Left colon (tissue), 2 donors: ENCODE measurements at regions of chr1 and their contacts with region 1.

Region 1: GRCh38 chr1:42456010-42456758 is at the starts of genes PPCS and ZMYND12:
- DNase-seq: peak; percentile 83 to 96
- ATAC-seq: peak; percentile 94
- total RNA-seq, gene PPCS: 78.2 to 92.4 TPM
- total RNA-seq, gene ZMYND12: 1.2 to 2.4 TPM

Region 2: DNA sequence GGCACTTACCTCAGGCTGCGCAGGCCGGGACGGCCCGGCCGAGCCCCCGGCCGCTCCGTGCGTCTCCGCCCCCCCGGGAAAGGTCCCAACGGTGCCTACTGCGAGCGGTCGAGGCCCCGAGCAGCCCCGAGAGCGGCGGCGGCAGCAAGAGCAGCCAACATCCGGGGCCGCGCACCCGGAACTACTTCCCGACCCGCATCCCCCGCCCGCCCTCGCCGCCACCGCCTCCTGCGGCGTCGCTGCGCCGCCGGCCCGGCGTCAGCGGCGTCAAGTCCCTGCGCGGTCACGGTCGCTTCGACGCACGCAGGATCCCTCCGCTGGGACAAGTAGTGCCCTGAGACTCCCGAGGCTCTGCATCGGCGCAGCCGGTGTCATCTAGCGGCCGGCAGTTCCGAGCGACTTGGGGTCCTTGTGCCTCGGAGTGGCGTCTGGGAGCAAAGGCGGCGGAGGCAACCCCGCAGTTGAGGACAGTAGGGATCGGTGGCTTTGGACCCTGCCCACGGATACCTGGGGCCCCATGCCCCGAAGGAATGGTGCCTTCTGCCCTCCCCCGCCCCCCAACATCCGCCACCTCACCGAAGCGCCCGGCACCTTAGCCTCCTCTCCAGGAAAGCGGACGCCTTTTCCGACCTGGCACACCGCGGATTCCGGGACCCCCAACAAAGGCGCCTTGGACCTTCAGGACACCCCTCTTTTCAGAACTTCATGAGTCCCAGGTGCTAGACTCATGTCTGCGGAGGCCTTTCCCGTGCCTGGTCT is 121.0 kb before region 1 on chr1 and contains the start of gene FOXJ3:
- intact Hi-C with region 1: loop called in 1 of 2 experiments (anchors 10 kb)
- DNase-seq: peak; percentile 89 to 96
- ATAC-seq: peak; percentile 90
- total RNA-seq, gene FOXJ3: 45.3 to 58.9 TPM